Activated B cell treated with CpG ODN at 0.5 μM for 24 hours (primary cell): ENCODE measurements at regions of chr9 and their contacts with region 1.

Region 1: DNA sequence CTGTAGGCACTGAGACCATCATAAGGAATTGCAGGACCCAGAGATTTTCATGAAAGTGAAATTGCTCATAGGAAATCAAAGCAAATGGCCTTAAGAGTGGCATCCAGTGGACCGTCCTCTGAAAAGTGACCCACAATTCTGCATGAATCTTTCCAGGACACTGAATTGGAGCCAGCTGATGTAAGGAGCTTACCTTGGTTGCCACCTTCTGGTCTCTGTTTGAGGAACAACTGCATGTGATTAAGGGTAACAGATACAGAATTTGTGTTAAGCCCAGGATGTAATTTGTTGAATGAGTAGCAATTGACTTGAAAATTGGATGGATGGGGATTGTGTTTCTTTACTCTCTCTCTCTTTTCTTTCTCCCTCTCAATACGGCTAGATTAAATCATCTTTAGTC is 49.9 kb upstream of the GAS1 start:
- DNase-seq: no peak
- ATAC-seq: no peak
- H3K4me3 Mint-ChIP-seq: no peak overlapping the region
- H3K27ac Mint-ChIP-seq: no peak overlapping the region
- H3K4me1 Mint-ChIP-seq: no peaks in the 10 kb centered on the region
- H3K27me3 Mint-ChIP-seq: no peaks in the 10 kb centered on the region
- CTCF ChIP-seq: no peak

Region 2: GRCh38 chr9:86939321-86939720 is 57.8 kb before region 1 on chr9:
- CTCF ChIA-PET with region 1: no interaction called
- POLR2A ChIA-PET with region 1: no interaction called
- intact Hi-C with region 1: loop called (anchors 10 kb)
- DNase-seq: no peak
- ATAC-seq: no peak
- H3K4me3 Mint-ChIP-seq: no peak overlapping the region
- H3K27ac Mint-ChIP-seq: no peak overlapping the region
- H3K4me1 Mint-ChIP-seq: no peaks in the 10 kb centered on the region
- H3K27me3 Mint-ChIP-seq: peaks cover 39% of the 10 kb centered on the region
- CTCF ChIP-seq: no peak

Region 3: DNA sequence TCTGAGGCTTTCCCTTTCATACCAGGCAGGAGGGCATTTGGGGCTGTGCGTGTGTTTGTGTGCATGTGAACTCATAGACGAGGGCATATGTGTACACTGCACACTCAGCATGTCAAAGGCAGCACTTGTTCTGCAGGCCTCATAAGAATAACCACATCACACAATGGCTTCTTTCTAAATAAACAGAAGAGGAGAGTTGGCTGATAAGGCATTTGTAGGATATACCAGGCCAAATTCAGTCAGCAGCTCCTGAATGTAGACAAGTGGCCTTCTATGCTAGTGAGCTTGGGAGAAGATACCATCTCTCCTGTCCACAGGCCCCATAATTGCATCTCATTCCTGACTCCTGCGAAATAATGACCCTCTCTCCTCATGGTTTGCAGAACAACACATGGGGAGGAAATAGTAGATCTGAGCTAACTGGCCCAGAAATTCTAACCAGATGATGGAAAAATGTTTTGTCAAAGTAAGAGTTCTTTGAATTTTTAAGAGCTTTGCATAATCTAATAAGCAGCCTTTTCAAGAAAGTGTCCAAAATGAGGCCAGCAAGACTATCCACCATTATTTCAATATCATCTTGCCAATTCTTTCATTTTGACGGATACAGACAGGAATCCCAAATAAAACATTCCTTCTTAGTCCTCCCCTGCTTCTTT is 10.7 kb after region 1 on chr9:
- CTCF ChIA-PET with region 1: no interaction called
- POLR2A ChIA-PET with region 1: no interaction called
- intact Hi-C with region 1: no loop called
- DNase-seq: no peak
- ATAC-seq: no peak
- H3K4me3 Mint-ChIP-seq: no peak overlapping the region
- H3K27ac Mint-ChIP-seq: no peak overlapping the region
- H3K4me1 Mint-ChIP-seq: no peaks in the 10 kb centered on the region
- H3K27me3 Mint-ChIP-seq: no peaks in the 10 kb centered on the region
- CTCF ChIP-seq: no peak